BJ (cell line): ENCODE measurements at regions of chr16 and their contacts with region 1.

Region 1: DNA sequence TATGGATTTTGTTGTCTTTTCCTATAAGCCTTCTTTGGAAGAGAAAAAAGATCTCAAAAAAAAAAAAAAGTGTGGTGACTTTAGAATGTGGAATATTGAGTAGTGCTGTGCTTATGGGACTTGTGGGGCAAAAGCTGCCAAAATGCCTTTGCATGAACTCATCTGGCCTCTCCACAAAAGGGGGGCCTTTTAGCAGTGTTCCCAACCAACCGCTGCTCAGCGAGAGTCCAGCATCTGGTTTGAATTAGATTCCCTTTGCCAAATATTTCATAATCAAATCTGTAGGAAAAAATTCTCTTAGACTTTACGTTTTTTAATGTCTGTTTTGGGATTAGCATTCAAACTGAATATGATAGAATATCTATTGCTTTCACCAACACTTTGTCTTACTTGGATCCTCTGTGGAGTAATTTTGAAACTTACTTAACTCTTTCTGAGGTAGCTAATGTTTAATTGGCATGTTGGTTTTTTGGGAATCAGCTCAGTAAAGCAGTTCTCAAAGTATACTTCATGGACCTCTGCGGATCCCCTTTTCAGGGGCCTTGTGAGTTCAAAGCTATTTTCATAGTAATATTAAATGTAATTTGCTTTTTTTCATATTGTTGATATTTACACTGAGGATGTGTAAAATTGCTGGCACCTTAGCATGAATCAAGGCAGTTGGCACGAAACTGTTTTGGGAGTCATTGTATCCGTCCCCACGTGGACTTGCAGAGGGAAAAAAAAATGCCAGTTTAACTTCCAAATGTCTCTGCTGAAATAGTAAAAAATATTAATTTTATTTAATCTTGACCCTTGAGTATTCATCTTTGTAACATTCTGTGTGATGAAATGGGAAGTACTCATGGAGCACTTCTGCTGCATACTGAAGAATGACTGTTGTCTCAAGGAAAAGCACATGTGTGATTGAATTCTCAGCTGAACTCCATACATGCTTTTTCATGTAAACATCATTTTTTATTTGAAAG is 34.7 kb upstream of the VPS4A start:
- DNase-seq: peak; percentile 87
- H3K4me3 ChIP-seq: peak overlapping the region; percentile 11; the same call in 1 of the 2 replicates
- H3K27me3 ChIP-seq: no peaks in the 10 kb centered on the region
- CTCF ChIP-seq: no peak

Region 2: DNA sequence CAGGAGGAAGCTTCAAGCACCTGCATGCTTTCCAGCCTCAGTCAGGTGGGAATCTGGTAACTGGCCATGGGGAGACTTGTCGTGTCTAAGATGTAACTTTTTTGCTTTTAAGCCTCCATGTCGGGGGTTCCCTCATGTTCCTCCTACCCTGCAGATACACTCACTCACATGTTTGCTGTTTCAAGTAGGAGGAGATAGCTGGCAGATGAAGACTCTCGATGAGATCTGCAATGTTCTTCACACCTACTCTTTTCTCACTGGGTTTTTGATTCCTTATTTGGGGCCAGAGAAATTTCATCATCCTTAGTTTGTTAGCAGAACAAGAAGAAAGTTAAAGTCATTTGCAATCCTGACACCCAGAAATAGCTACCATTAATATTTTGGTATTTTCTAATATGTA is 119.2 kb before region 1 on chr16:
- CTCF ChIA-PET with region 1: no interaction called
- POLR2A ChIA-PET with region 1: interaction called, 16 read pairs
- DNase-seq: no peak
- H3K4me3 ChIP-seq: no peak overlapping the region
- H3K27me3 ChIP-seq: no peaks in the 10 kb centered on the region
- CTCF ChIP-seq: no peak

Region 3: DNA sequence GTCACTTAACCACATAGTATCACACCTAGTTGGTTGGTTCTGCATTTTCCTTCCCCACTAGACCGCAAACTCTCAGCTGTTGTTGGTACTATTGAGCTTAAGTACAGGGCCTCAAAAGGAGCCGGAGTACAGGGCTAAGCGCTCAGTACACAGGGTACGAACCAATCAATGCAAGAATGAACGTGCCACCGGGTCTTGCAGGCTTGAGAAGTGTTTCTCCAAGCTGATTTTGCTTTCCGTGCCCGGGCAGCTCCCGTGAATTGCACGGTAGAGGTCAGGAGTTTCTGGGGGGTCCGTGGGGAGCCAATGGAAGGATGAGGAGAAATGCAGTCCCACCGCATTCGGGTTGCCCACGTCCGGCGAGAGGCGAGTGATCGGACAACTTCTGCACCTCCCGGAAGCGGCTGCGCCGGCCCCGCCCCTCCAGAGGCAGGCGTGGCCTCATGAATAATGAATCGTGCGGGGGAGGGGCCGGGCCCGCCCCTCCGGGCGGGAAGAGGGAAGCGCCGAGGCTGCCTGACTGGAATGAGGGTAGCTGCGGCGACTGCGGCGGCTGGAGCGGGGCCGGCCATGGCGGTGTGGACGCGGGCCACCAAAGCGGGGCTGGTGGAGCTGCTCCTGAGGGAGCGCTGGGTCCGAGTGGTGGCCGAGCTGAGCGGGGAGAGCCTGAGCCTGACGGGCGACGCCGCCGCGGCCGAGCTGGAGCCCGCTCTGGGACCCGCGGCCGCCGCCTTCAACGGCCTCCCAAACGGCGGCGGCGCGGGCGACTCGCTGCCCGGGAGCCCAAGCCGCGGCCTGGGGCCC is 89.6 kb before region 1 on chr16 and contains the start of gene SNTB2:
- CTCF ChIA-PET with region 1: no interaction called
- POLR2A ChIA-PET with region 1: no interaction called
- DNase-seq: no peak
- H3K4me3 ChIP-seq: peak within 1 kb of the TSS; percentile 78
- H3K27me3 ChIP-seq: no peaks in the 10 kb centered on the region
- CTCF ChIP-seq: no peak
- polyA plus RNA-seq, gene SNTB2: 43.1 and 50.5 TPM in 2 replicates